Panc1 (cell line): ENCODE measurements at regions of chr9 and their contacts with region 1.

Region 1: GRCh38 chr9:133282464-133283238 is 7.7 kb upstream of the ABO start:
- DNase-seq: no peak
- ATAC-seq: no peak
- H3K4me3 ChIP-seq: no peak overlapping the region
- H3K27ac ChIP-seq: no peak overlapping the region
- H3K4me1 ChIP-seq: no peaks in the 10 kb centered on the region
- H3K27me3 ChIP-seq: no peaks in the 10 kb centered on the region
- CTCF ChIP-seq: no peak

Region 2: DNA sequence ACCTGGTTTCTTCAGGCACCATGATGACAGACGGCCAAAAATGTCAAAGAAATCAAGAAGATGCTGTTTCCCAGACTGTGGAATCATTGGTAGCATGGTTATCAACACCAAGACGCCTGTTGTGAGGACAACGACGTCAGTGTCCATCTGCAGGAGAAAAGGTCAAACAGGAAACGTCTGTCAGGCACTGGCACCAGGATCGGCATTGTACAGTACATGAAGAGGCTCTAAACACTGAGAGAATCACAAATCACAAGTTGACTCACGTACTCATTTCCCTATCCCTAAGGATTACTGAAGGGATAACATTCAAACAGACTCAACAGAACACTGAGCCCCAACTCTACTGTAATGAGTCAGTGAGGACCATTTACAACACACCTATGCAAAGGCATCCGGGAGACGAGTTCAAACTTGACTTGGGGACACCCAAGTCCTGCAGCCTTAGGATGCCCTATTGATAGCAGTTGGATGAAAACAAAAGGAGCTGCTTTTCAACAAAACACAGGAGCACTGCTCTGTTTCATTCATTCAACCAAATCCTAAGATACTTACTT is 359.2 kb before region 1 on chr9:
- CTCF ChIA-PET with region 1: no interaction called
- POLR2A ChIA-PET with region 1: no interaction called
- in situ Hi-C with region 1: no loop called
- intact Hi-C with region 1: no loop called
- DNase-seq: no peak
- ATAC-seq: no peak
- H3K4me3 ChIP-seq: no peak overlapping the region
- H3K27ac ChIP-seq: no peak overlapping the region
- H3K4me1 ChIP-seq: no peaks in the 10 kb centered on the region
- H3K27me3 ChIP-seq: no peaks in the 10 kb centered on the region
- CTCF ChIP-seq: no peak

Region 3: DNA sequence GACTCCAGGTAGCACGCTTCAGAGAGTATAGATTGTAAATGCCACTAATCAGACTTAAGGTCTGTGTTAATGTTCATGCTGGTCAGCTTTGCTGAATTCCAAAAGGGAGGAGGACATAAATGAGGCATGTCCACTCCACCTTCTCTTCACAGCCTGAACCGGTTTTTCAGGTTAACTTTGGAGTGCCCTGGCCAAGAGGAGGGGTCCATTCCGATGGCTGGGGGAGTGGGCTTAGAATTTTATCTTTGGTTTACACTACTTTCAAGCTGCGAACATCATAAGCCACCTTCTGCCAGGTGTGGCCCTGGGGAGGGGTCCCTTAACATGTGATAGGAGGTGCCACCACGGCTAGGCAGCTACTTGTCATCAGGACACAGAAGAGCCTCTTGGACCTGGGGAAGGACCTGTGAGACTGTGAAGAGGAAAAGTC is 31.9 kb before region 1 on chr9:
- CTCF ChIA-PET with region 1: no interaction called
- POLR2A ChIA-PET with region 1: interaction called, 10 read pairs
- in situ Hi-C with region 1: no loop called
- intact Hi-C with region 1: no loop called
- DNase-seq: no peak
- ATAC-seq: no peak
- H3K4me3 ChIP-seq: no peak overlapping the region
- H3K27ac ChIP-seq: no peak overlapping the region
- H3K4me1 ChIP-seq: no peaks in the 10 kb centered on the region; the same call in 1 of the 2 replicates
- H3K27me3 ChIP-seq: no peaks in the 10 kb centered on the region
- CTCF ChIP-seq: no peak

Region 4: GRCh38 chr9:134551650-134552348 is 1269.1 kb after region 1 on chr9:
- CTCF ChIA-PET with region 1: no interaction called
- POLR2A ChIA-PET with region 1: no interaction called
- in situ Hi-C with region 1: no loop called
- intact Hi-C with region 1: no loop called
- DNase-seq: no peak
- ATAC-seq: peak; percentile 56; the same call in 1 of the 2 replicates
- H3K4me3 ChIP-seq: no peak overlapping the region
- H3K27ac ChIP-seq: no peak overlapping the region
- H3K4me1 ChIP-seq: no peaks in the 10 kb centered on the region; the same call in 1 of the 2 replicates
- H3K27me3 ChIP-seq: no peaks in the 10 kb centered on the region
- CTCF ChIP-seq: no peak